Activated CD4-positive, alpha-beta memory T cell treated with anti-CD3 and anti-CD28 coated beads for 36 hours (primary cell): ENCODE measurements at regions of chr10 and their contacts with region 1.

Region 1: DNA sequence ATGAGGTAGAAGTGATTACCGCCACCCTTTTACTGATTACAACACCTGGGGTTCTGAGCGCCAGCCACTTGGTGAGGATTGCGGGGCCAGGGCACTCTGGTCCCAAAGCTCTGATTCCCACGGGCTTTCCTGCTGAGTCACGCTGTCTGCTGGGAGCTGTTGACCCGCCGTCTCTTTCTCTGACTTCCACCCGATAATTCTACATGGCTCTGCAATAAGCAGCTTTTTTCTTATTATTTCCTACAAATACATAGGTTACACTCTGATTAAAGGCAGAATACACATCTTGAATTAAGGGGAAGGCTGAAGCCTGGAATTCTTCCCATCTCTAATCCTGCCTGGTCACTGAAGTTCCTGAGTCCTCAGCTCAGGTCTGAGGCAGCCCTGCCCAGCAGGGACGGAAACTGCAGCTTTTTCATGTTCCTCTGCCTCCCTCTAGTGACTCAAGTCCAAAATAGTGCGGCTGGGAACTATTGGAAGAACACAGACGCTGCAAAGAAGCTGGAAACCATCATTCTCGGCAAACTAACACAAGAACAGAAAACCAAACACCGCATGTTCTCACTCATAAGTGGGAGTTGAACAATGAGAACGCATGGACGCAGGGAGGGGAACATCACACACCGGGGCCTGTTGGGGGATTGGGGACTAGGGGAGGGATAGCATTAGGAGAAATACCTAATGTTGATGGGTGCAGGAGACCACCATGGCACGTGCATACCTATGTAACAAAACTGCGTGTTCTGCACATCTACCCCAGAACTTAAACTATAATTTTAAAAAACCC is 178.3 kb downstream of the PRKCQ start:
- DNase-seq: peak; percentile 71
- H3K4me3 Mint-ChIP-seq: peak overlapping the region; percentile 9
- H3K27ac Mint-ChIP-seq: peak overlapping the region; percentile 35
- H3K4me1 Mint-ChIP-seq: peaks cover 42% of the 10 kb centered on the region
- H3K27me3 Mint-ChIP-seq: peaks cover 3% of the 10 kb centered on the region

Region 2: DNA sequence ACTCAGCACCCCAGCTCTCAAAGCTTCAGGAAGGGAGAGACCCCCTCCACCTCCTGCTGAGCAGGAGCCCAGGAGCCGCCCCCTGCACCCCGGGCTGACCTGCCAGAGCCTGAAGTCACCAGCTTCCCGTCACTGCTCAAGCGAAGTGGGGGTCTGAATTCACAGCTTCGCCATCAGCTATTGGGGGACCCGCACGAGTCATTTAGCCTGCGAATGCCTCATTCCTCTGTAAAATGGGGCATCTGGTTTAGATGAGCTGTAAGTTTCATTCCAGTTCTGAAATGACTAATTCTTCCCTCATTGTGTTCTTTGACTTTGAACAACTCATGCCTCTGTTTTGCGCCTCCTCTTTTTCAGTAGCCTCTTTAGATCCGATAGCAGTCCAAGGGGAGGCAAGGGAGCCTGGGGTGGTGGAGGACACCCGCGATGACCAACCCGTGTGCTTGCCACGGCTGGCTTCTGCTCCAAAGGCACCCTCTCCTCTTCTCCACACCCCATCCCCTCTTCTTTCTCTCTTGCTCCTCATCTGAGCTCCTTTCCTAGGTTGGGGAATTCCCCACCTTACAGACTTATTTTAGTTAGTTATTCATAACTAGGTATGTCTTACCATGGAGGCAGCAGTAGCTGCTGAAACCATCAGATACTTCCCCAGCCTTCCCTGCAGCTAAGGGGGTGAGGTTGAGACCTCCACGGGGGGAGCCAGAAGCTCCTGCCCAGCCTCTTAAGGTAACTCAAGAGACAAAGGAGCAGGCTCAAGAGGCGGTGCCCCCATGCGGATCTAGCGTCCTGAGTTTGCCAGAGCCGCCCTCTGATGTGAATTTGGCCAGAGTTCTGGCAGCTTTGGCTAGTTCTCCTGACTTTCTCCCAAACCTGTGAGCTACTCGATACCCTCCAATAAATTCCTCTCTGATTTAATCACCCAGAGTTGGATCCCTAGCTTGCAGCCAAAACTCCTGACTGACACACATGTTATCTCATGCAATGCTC is 265.2 kb before region 1 on chr10:
- CTCF ChIA-PET with region 1: interaction called, 18 read pairs
- POLR2A ChIA-PET with region 1: interaction called, 5 read pairs
- intact Hi-C with region 1: no loop called
- DNase-seq: peak; percentile 88
- H3K4me3 Mint-ChIP-seq: peak overlapping the region; percentile 52
- H3K27ac Mint-ChIP-seq: peak overlapping the region; percentile 82
- H3K4me1 Mint-ChIP-seq: peaks cover 63% of the 10 kb centered on the region
- H3K27me3 Mint-ChIP-seq: peaks cover 10% of the 10 kb centered on the region

Region 3: GRCh38 chr10:6185039-6185716 is 216.6 kb before region 1 on chr10:
- CTCF ChIA-PET with region 1: interaction called, 12 read pairs
- POLR2A ChIA-PET with region 1: interaction called, 3 read pairs
- intact Hi-C with region 1: loop called (anchors 5 kb)
- DNase-seq: peak; percentile 39
- H3K4me3 Mint-ChIP-seq: no peak overlapping the region
- H3K27ac Mint-ChIP-seq: peak overlapping the region; percentile 60
- H3K4me1 Mint-ChIP-seq: peaks cover 37% of the 10 kb centered on the region
- H3K27me3 Mint-ChIP-seq: no peaks in the 10 kb centered on the region

Region 4: DNA sequence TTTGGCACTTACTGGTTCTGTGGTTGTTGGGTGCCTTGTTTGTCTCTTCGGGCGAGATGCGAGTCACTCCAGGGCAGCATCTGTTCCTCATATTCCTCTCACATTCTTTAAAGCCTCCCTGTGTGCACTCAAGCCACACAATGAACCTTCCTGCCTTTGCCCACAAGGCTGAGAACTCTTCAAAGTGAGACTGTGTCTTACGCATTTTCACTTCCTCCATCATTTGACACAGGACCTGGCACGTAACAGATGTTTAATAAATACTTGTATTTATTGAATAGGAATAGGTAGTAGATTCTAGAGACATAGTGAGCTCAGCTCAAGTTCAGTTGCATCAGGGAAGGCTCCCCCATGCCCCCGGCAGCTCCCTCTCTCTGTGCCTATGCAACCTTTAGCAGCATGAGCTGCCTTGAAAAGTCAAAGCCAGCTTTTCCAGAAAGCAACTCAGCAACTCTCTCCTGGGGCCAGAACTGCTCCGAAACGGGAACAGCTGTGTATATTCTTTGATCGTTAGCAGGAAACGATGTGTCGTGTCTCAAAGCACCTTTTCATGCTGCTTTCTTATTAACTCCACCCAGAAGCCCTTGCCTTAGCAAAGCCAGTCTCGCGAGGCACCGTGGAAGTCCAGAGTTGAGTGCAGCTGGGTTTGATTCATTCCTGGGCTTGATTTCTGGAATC is 101.5 kb before region 1 on chr10:
- CTCF ChIA-PET with region 1: interaction called, 15 read pairs
- POLR2A ChIA-PET with region 1: no interaction called
- intact Hi-C with region 1: no loop called
- DNase-seq: peak; percentile 68
- H3K4me3 Mint-ChIP-seq: peak overlapping the region; percentile 64
- H3K27ac Mint-ChIP-seq: peak overlapping the region; percentile 93
- H3K4me1 Mint-ChIP-seq: peaks cover 61% of the 10 kb centered on the region
- H3K27me3 Mint-ChIP-seq: no peaks in the 10 kb centered on the region

Region 5: GRCh38 chr10:6382081-6382480 is 19.7 kb before region 1 on chr10:
- CTCF ChIA-PET with region 1: interaction called, 21 read pairs
- POLR2A ChIA-PET with region 1: no interaction called
- intact Hi-C with region 1: no loop called
- DNase-seq: peak; percentile 64
- H3K4me3 Mint-ChIP-seq: peak overlapping the region; percentile 47
- H3K27ac Mint-ChIP-seq: peak overlapping the region; percentile 77
- H3K4me1 Mint-ChIP-seq: peaks cover 29% of the 10 kb centered on the region
- H3K27me3 Mint-ChIP-seq: no peaks in the 10 kb centered on the region